HEK293 (cell line): ENCODE measurements at regions of chr17 and their contacts with region 1.

Region 1: DNA sequence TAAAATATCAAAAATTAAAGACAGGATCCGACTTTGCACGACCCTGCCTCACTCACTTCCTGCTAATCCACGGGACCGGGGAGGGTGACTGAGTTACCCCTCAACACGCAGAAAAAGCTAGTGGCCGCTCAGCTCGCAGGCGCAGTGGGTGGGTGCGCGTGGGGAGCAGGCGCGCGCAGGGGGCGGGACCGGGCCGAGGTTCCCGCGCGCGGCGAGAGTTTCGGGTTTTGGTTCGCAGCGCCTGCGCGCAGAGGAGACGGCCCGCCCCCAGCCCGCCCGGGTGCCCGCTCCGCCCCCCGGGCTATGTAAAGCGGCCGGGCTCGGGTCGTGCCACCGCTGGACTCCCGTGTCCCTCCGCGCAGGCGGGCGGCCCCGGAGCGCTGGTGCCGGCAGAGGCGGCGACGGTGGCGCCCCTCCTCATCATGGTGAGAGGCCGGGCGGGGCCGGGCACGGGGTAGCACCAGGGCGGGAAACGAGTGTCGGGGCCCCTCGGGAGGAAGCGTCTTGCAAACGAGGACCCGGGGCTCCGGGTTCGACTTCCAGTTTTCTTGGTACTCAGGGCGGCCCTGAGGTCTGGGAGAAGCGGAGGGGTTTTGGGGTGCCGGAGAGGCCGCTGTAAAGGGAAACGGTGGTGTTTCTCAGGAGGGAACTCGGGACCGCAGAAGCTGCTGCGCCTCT is at the start of gene CNP:
- H3K4me3 ChIP-seq: peak within 1 kb of the TSS; percentile 76
- H3K27ac ChIP-seq: peak within 1 kb of the TSS; percentile 89
- H3K4me1 ChIP-seq: 0 out of 2 replicates have a peak, but pooled peaks cover 4% of the 10 kb centered on the region
- CTCF ChIP-seq: no peak

Region 2: GRCh38 chr17:41901646-41902045 is 65.0 kb before region 1 on chr17:
- CTCF ChIA-PET with region 1: no interaction called
- POLR2A ChIA-PET with region 1: no interaction called
- H3K4me3 ChIP-seq: no peak overlapping the region
- H3K27ac ChIP-seq: no peak overlapping the region
- H3K4me1 ChIP-seq: no peaks in the 10 kb centered on the region
- CTCF ChIP-seq: no peak

Region 3: DNA sequence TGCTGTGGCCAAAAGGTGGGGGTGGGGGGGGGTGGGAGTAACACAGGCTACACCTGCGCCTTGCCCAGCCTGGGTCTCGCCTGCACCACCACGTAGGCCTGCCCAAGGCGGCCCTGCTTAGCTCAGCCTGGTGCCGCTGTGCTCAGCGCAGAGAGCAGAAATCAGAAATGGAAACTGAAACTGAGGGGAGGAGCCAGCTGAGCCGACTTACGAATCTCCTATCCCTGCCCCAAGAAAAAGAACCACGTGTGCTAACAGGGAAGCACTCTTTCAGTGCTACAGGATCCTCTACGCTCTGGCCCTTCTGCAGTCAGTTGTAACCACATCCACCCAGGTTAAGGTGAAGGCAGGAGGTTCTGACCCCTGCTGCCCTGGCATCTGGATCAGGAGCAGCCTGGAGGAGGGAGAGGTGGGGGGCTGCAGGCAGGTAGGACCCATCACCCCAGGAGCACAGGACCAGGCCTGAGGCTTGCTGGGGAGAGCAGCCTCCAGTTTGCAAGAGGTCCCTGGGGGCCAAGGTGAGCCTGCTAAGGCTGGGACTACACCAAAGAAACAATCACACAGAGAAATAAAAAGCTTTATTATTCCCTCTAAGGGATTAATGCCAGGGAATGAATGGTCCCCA is 146.1 kb after region 1 on chr17 and contains the start of gene DHX58:
- CTCF ChIA-PET with region 1: interaction called, 10 read pairs
- POLR2A ChIA-PET with region 1: no interaction called
- H3K4me3 ChIP-seq: no peak within 1 kb of the TSS
- H3K27ac ChIP-seq: no peak within 1 kb of the TSS
- H3K4me1 ChIP-seq: peaks cover 4% of the 10 kb centered on the region; the same call in 1 of the 2 replicates
- CTCF ChIP-seq: no peak

Region 4: DNA sequence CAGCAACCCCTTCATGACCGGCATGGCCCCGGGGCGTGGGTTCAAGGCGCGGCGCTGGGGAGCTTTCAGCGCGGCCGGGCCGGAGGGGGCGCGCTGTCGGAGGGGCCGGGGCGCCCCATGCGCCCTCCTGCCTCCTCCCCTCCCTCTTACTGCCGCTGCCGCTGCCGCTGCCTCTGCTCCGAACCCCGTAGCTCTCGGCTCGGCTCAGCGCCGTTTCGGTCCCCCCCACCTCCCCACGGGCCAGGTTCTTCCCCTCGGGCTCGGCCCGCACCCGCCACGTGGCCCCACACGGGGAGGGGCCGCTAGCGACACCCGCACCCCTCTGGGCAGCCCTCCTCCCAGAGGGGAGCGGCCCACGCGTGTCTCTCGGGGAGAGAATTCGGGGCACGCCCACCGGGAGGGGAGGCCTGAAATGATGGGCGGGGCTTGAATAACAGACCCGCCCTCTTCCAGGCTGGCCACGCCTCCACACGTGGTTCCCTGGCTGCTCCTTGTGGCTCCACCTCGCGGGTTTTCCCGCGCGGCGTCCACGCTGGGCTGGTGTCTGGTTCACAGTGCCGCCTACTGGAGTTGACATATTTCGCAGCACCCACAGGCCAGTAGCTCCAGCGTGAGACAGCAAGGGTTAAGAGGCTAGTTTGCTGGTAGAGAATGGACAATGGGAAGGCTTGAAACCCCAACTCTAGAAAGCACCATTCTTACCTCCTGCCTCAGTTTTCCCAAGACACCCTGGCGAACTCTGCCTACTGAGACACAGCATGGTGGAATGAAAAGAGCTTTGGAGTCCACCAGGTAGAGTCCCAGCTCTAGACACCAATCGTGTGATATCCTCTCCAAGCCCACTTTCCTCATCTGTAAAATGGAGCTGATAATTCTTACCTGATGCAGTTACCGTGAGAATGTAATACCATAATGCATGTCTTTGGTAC is 214.6 kb after region 1 on chr17 and contains the start of gene KCNH4:
- CTCF ChIA-PET with region 1: no interaction called
- POLR2A ChIA-PET with region 1: no interaction called
- H3K4me3 ChIP-seq: peak within 1 kb of the TSS; percentile 28
- H3K27ac ChIP-seq: no peak within 1 kb of the TSS
- H3K4me1 ChIP-seq: no peaks in the 10 kb centered on the region
- CTCF ChIP-seq: peak; percentile 26; the same call in 1 of the 2 replicates